ENCODE measurements at regions of chr22 and their contacts with region 1.

Region 1: DNA sequence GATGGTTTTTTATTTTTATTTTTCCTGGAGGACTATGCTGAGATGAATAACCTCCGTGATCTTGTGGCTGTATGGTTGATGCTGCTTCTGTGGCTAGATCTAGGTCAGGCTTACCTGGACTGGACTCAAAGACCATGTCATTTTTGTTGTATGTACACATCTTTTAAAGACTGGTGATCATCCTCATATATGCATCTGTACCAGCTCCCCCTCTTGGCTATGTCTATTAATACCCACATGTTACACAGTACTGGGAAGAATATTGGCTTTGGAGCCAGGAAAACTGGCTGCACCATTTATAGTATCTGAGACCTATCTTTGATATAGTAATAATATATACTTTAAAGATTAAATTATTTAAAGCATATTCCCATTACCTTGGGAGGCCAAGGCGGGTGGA is 18.4 kb upstream of the PITPNB start:
- DNase-seq: no peak
- ATAC-seq: no peak
- H3K4me3 ChIP-seq: no peak overlapping the region
- H3K4me3 Mint-ChIP-seq: no peak overlapping the region
- H3K27ac ChIP-seq: no peak overlapping the region
- H3K27ac Mint-ChIP-seq: no peak overlapping the region
- H3K4me1 ChIP-seq: no peaks in the 10 kb centered on the region
- H3K4me1 Mint-ChIP-seq: no peaks in the 10 kb centered on the region
- H3K27me3 ChIP-seq: no peaks in the 10 kb centered on the region
- H3K27me3 Mint-ChIP-seq: no peaks in the 10 kb centered on the region
- CTCF ChIP-seq: no peak

Region 2: GRCh38 chr22:27094633-27095308 is 842.7 kb before region 1 on chr22:
- CTCF ChIA-PET with region 1: no interaction called
- POLR2A ChIA-PET with region 1: no interaction called
- intact Hi-C with region 1: no loop called
- DNase-seq: no peak
- ATAC-seq: no peak
- H3K4me3 ChIP-seq: no peak overlapping the region
- H3K4me3 Mint-ChIP-seq: no peak overlapping the region
- H3K27ac ChIP-seq: no peak overlapping the region
- H3K27ac Mint-ChIP-seq: no peak overlapping the region
- H3K4me1 ChIP-seq: no peaks in the 10 kb centered on the region
- H3K4me1 Mint-ChIP-seq: no peaks in the 10 kb centered on the region
- H3K27me3 ChIP-seq: peaks cover 8 to 21% of the 10 kb centered on the region in 2 experiments
- H3K27me3 Mint-ChIP-seq: peaks cover 35% of the 10 kb centered on the region
- CTCF ChIP-seq: no peak

Region 3: DNA sequence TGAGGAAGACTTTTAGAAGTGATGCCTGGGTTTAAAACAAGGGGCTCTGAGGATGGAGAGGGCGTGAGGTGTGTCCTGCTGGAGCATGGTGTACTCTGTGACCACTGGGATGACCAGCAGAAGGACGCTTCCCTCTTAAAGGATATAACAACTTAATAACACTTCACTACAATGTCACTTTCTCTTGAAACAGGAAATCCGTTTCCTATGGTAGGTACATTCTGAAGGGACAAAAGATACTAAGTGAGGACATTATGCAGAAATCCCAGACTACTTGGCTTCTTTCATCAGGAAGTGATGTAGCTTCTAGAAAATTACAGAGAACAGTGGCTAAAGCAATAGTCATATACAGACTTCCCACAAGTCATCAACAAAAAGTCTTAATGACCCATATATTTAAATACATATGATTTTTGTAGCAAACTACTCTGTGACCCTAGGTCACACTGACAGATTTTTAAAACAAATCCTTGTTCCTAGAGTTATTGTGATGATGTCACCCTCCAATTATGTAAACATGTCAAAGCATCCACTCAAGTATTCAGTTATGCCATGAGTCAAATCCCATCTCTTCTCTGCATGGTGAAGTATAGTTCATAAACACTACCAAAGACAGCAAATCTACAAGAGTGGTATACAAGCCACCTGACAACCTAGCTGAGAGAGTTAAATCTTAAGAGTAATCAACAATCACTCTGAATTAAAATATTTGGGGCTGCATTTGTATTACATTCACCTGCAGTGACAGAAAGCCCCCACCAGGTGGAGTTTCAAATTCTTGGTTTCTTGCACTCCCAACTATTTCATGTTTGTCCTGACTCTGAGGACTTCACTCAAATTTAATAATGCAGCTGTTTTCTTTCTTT is 51.2 kb before region 1 on chr22:
- CTCF ChIA-PET with region 1: interaction called, 4 read pairs
- POLR2A ChIA-PET with region 1: no interaction called
- intact Hi-C with region 1: loop called in 1 of 2 experiments (anchors 5 kb)
- DNase-seq: peak; percentile 13 to 65 (median 30)
- ATAC-seq: peak; percentile 55
- H3K4me3 ChIP-seq: no peak overlapping the region
- H3K4me3 Mint-ChIP-seq: no peak overlapping the region
- H3K27ac ChIP-seq: no peak overlapping the region
- H3K27ac Mint-ChIP-seq: peak overlapping the region; percentile 27
- H3K4me1 ChIP-seq: no peaks in the 10 kb centered on the region
- H3K4me1 Mint-ChIP-seq: peaks cover 21% of the 10 kb centered on the region
- H3K27me3 ChIP-seq: no peaks in the 10 kb centered on the region
- H3K27me3 Mint-ChIP-seq: no peaks in the 10 kb centered on the region
- CTCF ChIP-seq: peak; percentile 88

Measured in CD4-positive, alpha-beta T cell (primary cell).